PC-3 (cell line): ENCODE measurements at regions of chr17 and their contacts with region 1.

Region 1: DNA sequence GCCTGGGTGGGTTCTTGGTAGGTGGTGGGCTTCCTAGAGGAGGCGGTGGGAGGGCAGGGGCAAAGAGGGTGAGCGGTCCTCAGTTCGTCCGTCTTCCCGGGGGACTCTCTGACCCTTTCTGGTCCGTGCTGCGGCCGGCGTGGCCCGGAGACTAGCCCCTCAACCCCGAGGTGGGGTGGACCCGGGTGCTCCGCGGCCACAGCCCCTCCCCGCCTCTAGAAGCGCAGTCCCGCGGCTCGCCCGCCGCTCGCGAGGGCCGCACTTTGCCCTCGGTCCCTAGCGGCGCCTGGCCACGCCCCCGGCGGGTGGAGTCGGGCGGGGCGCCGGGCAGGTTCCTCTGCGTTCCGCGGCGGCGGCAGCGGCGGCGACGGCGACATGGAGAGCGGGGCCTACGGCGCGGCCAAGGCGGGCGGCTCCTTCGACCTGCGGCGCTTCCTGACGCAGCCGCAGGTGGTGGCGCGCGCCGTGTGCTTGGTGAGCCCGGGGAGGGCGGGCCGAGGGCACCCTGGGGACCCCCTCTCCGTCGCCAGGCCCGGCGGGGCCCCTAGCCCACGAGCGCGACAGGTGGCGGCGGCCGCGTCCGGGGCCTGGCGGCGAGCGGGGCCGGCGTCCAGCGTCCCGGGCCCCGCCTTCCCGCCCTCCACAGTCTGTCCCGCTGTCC is at the start of gene SYNGR2:
- DNase-seq: peak; percentile 94
- ATAC-seq: peak; percentile 67
- H3K4me3 ChIP-seq: peak within 1 kb of the TSS; percentile 76
- H3K27ac ChIP-seq: peak within 1 kb of the TSS; percentile 48
- H3K4me1 ChIP-seq: peaks cover 20% of the 10 kb centered on the region
- H3K27me3 ChIP-seq: no peaks in the 10 kb centered on the region
- CTCF ChIP-seq: no peak
- total RNA-seq, gene SYNGR2: 213 and 220 TPM in 2 replicates

Region 2: GRCh38 chr17:78128551-78129350 is 39.6 kb before region 1 on chr17 and contains the start of gene TMC6:
- CTCF ChIA-PET with region 1: interaction called, 5 read pairs
- POLR2A ChIA-PET with region 1: interaction called, 16 read pairs
- intact Hi-C with region 1: loop called (anchors 1 kb)
- DNase-seq: peak; percentile 90
- ATAC-seq: peak; percentile 61
- H3K4me3 ChIP-seq: peak within 1 kb of the TSS; percentile 95
- H3K27ac ChIP-seq: peak within 1 kb of the TSS; percentile 79
- H3K4me1 ChIP-seq: peaks cover 27% of the 10 kb centered on the region
- H3K27me3 ChIP-seq: no peaks in the 10 kb centered on the region
- CTCF ChIP-seq: no peak
- total RNA-seq, gene TMC6: 97.3 and 138 TPM in 2 replicates

Region 3: GRCh38 chr17:78226749-78227399 is 58.5 kb after region 1 on chr17:
- CTCF ChIA-PET with region 1: no interaction called
- POLR2A ChIA-PET with region 1: no interaction called
- intact Hi-C with region 1: no loop called
- DNase-seq: peak; percentile 71
- ATAC-seq: peak; percentile 89
- H3K4me3 ChIP-seq: peak overlapping the region; percentile 26; the same call in 1 of the 2 replicates
- H3K27ac ChIP-seq: no peak overlapping the region
- H3K4me1 ChIP-seq: peaks cover 8% of the 10 kb centered on the region; the same call in 1 of the 2 replicates
- H3K27me3 ChIP-seq: peaks cover 3% of the 10 kb centered on the region; the same call in 1 of the 2 replicates
- CTCF ChIP-seq: no peak